Activated CD4-positive, alpha-beta memory T cell treated with anti-CD3 and anti-CD28 coated beads for 36 hours (primary cell): ENCODE measurements at regions of chr6 and their contacts with region 1.

Region 1: GRCh38 chr6:144582939-144583613 is 297.9 kb downstream of the UTRN start:
- DNase-seq: peak; percentile 51
- H3K4me3 Mint-ChIP-seq: peak overlapping the region; percentile 70
- H3K27ac Mint-ChIP-seq: peak overlapping the region; percentile 74
- H3K4me1 Mint-ChIP-seq: peaks cover 36% of the 10 kb centered on the region
- H3K27me3 Mint-ChIP-seq: no peaks in the 10 kb centered on the region

Region 2: DNA sequence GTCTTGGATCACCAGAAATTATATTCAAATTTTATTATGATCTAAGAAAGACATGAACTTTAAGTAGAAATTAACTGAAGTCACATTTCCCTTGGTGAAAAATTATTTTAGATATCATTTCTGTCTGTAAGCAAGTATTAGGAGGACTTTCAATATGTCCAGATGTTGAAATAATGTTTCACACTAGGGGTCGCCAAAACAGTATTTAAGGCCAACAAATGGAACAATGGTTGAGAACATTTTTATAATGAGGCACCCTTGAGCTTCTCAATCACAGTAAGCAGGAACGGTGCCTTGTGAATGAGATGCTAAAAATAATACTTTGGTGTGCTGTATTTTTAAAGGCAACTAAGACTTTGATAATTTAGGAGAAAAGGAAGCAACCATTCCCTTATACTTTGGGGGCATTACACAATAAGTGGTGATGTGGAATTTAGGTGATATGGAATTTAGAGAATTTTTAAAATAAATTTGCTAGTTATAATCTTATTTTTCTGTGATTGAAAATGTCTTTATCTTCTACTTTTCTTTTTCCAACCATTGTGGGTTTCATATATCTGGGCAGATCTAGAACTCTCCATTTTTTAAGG is 478.1 kb before region 1 on chr6:
- CTCF ChIA-PET with region 1: no interaction called
- POLR2A ChIA-PET with region 1: no interaction called
- intact Hi-C with region 1: loop called (anchors 2 kb)
- DNase-seq: no peak
- H3K4me3 Mint-ChIP-seq: no peak overlapping the region
- H3K27ac Mint-ChIP-seq: peak overlapping the region; percentile 53
- H3K4me1 Mint-ChIP-seq: peaks cover 7% of the 10 kb centered on the region
- H3K27me3 Mint-ChIP-seq: no peaks in the 10 kb centered on the region

Region 3: DNA sequence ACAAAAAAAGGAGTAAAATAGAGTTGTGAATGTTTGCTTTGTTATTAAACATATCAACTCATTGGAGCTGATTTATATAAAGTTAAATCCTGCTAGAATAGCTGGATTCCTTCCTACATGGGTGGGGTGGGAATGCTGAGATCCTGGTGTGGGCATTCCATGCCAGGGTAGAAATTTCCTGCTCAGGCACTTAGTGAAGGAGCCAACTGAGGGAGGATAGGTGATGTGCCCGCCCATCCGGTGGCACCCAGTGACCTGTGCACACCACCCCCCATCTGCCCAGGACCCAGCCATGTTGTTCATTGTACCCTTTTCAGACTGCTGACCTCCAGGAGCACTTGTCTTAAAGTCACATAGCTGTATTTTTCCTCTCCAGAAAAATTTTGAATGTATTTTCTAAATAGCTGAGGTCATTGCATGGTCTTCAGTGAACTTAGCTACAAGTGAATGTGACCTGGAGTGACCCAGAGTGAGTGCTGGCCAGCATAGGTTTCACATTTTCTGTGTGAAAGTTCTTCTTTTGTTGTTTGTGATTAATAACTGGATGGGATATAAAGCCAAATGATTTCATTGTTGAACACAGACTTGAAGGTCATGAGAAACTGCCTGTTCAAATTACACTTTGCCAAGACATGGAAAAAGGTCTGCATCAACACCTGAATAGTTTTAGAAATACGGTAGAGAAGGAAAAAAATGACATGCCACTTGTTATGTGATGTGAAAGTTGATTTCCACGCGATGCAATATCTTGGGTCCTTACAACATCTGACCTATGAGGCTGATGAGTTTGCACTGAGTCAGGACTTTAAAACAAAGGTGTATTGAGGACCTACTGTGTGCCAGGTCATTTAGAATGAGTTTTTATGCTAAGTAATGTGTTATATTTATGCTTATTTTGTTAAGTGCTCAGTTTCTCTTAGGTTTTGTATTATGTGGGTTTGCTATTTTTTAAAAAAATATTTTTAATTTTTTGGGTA is 220.7 kb before region 1 on chr6:
- CTCF ChIA-PET with region 1: no interaction called
- POLR2A ChIA-PET with region 1: no interaction called
- intact Hi-C with region 1: no loop called
- DNase-seq: no peak
- H3K4me3 Mint-ChIP-seq: no peak overlapping the region
- H3K27ac Mint-ChIP-seq: peak overlapping the region; percentile 13
- H3K4me1 Mint-ChIP-seq: peaks cover 65% of the 10 kb centered on the region
- H3K27me3 Mint-ChIP-seq: no peaks in the 10 kb centered on the region

Region 4: DNA sequence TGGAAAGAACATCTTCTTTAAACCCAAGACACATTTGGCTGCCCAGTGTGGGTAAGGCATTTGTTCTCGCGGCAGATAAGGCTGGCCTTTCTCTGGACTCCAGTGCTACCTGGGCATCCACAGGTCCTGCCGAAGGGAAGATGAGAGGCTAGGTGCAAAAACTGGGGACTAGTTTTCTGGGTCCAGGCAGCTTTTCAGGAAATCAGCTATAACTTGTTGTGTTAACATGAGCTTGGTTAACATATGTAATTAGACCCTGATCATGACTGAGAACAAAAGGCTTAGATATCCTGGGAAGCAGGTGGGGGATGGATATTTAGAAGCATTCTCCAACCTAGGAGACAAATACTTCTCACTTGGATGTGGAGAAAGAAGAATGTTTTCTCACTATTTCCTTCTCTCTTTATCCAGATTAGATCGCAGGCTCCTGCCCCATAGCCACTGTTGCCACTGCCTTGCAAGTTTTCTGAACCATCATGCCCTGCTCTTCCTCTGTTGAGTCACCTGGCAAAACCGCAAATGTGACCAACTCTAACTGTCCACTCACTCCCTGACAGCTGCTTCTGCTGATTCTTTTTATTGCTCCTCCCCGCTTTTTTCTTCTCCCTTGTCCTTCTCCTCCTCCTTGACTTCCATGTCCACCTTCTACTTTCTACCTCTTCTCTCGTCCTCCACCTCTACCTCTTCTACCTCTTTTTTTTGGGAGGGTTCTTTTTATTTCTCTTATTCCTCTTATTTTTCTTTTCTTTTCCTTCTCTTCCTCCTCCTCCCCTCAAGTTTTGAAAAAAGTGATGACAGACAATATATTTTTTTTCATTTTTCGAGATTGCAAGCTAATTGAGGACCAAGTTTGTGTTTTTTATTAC is 39.8 kb before region 1 on chr6:
- CTCF ChIA-PET with region 1: interaction called, 3 read pairs
- POLR2A ChIA-PET with region 1: no interaction called
- intact Hi-C with region 1: loop called (anchors 1 kb)
- DNase-seq: peak; percentile 32
- H3K4me3 Mint-ChIP-seq: no peak overlapping the region
- H3K27ac Mint-ChIP-seq: no peak overlapping the region
- H3K4me1 Mint-ChIP-seq: peaks cover 20% of the 10 kb centered on the region
- H3K27me3 Mint-ChIP-seq: no peaks in the 10 kb centered on the region

Region 5: DNA sequence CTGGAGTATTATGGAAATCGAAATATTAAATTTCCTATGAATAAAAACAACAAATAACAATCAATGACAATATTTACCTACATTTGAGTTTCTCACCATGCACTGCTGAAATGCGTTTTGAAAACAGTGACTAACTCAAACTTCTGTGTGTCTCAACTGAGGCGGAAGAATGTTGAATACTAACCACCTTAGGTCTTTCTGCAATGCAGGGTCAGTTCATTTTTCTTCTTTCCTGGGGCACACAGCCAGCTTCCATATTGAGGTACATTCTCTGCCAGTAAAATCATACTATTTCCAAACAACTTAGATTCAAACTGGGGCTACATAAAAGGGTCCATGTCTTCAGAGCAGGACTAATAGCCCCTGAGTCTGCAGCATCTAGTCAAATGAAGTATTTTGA is 12.2 kb after region 1 on chr6:
- CTCF ChIA-PET with region 1: interaction called, 29 read pairs
- POLR2A ChIA-PET with region 1: interaction called, 3 read pairs
- intact Hi-C with region 1: loop called (anchors 1 kb)
- DNase-seq: no peak
- H3K4me3 Mint-ChIP-seq: no peak overlapping the region
- H3K27ac Mint-ChIP-seq: no peak overlapping the region
- H3K4me1 Mint-ChIP-seq: peaks cover 18% of the 10 kb centered on the region
- H3K27me3 Mint-ChIP-seq: no peaks in the 10 kb centered on the region

Region 6: GRCh38 chr6:144782634-144783033 is 199.6 kb after region 1 on chr6:
- CTCF ChIA-PET with region 1: interaction called, 3 read pairs
- POLR2A ChIA-PET with region 1: no interaction called
- intact Hi-C with region 1: loop called (anchors 2 kb)
- DNase-seq: peak; percentile 49
- H3K4me3 Mint-ChIP-seq: no peak overlapping the region
- H3K27ac Mint-ChIP-seq: no peak overlapping the region
- H3K4me1 Mint-ChIP-seq: peaks cover 3% of the 10 kb centered on the region
- H3K27me3 Mint-ChIP-seq: no peaks in the 10 kb centered on the region

Region 7: GRCh38 chr6:145028144-145028818 is 445.2 kb after region 1 on chr6:
- CTCF ChIA-PET with region 1: interaction called, 4 read pairs
- POLR2A ChIA-PET with region 1: no interaction called
- intact Hi-C with region 1: loop called (anchors 1 kb)
- DNase-seq: no peak
- H3K4me3 Mint-ChIP-seq: no peak overlapping the region
- H3K27ac Mint-ChIP-seq: no peak overlapping the region
- H3K4me1 Mint-ChIP-seq: no peaks in the 10 kb centered on the region
- H3K27me3 Mint-ChIP-seq: peaks cover 14% of the 10 kb centered on the region

Region 8: GRCh38 chr6:145633981-145634627 is 1051.0 kb after region 1 on chr6:
- CTCF ChIA-PET with region 1: interaction called, 11 read pairs
- POLR2A ChIA-PET with region 1: no interaction called
- intact Hi-C with region 1: loop called (anchors 5 kb)
- DNase-seq: peak; percentile 84
- H3K4me3 Mint-ChIP-seq: no peak overlapping the region
- H3K27ac Mint-ChIP-seq: no peak overlapping the region
- H3K4me1 Mint-ChIP-seq: peaks cover 5% of the 10 kb centered on the region
- H3K27me3 Mint-ChIP-seq: no peaks in the 10 kb centered on the region